Activated CD8-positive, alpha-beta T cell treated with anti-CD3 and anti-CD28 coated beads, Interleukin-2, amount 10 ng/mL, durations not matched to agents 7 days and 5 days (primary cell): ENCODE measurements at regions of chr11 and their contacts with region 1.

Region 1: DNA sequence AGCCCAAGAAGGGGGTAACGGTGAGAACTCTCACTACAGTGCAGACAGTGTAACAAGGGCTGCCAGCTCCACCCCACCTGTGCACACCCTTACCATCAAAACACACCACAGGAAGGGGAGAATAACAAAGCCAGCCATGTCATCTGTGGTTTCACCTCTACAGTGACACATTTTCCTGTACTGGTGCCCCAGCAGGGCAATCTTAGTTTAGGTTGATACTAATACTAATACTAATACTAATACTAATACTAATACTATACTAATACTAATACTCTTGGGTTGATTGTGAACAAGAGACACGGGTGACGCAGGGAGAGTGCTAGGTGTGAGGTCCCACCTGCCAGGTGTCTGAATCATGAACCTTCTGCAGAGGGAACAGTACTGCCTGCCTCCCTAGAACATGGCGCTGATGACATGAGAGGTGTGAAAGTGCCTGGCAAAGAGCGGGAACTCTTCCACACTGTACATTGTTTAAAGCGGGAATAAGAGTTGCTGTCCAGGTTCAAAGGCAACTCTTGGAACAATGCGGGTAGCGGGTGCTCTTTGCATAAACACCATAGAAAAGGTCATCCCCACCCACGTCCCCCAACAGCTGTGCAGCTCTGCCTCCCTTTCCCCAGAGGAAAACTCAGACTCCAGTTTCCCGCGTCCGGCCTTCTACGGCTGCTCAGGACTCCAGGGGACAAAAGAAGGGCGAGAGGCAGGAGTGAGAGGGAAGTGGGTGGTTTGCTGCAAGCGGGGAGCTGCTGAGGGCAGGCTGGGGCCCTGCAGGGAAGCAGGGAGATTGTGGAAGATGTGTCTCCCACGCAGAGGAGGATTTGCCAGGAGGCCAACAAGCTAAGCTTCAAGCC is 25.0 kb upstream of the TMPRSS4 start:
- DNase-seq: peak; percentile 86
- ATAC-seq: peak; percentile 91
- H3K4me3 Mint-ChIP-seq: peak overlapping the region; percentile 44
- H3K27ac Mint-ChIP-seq: peak overlapping the region; percentile 89
- H3K4me1 Mint-ChIP-seq: peaks cover 64% of the 10 kb centered on the region
- H3K27me3 Mint-ChIP-seq: peaks cover 2% of the 10 kb centered on the region

Region 2: DNA sequence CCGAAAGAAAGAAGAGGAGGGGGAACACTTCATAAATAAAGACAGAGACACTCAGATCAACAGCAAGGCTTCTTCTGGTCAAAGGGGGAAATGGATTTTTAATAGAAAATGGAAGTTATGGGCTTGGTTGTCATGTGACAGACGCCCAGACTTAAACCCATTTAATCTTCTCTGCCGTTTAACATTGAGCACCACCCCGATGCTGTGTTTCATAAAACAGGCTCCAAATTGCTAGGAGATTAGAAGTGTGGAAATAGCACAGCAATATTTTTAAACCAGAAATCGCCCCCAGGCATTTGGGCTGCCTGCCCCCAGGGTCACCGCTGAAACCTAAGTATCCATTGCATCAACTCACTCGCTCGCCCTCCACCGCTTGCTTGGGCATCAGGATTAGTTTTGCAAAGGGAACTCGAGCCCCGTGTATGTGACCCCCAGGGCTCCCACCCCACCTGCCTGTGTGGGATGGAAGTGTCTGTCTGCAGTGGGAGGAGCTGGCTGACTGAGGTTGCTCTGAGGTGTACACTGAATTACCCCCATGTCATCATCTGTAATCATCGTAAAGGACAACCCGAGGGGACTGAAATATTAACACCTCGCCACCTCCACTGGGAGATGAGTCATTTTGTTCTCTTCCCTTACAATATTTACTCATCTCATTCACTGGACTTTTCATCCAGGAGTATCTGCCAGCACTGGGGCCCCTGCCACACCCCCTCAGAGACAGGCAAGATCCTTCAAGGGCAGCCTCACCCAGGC is 265.5 kb before region 1 on chr11:
- CTCF ChIA-PET with region 1: no interaction called
- POLR2A ChIA-PET with region 1: no interaction called
- DNase-seq: no peak
- ATAC-seq: no peak
- H3K4me3 Mint-ChIP-seq: no peak overlapping the region
- H3K27ac Mint-ChIP-seq: no peak overlapping the region
- H3K4me1 Mint-ChIP-seq: no peaks in the 10 kb centered on the region
- H3K27me3 Mint-ChIP-seq: peaks cover 16% of the 10 kb centered on the region

Region 3: GRCh38 chr11:117807482-117808327 is 244.1 kb before region 1 on chr11:
- CTCF ChIA-PET with region 1: interaction called, 118 read pairs
- POLR2A ChIA-PET with region 1: interaction called, 3 read pairs
- DNase-seq: peak; percentile 86
- ATAC-seq: peak; percentile 66
- H3K4me3 Mint-ChIP-seq: no peak overlapping the region
- H3K27ac Mint-ChIP-seq: no peak overlapping the region
- H3K4me1 Mint-ChIP-seq: peaks cover 25% of the 10 kb centered on the region
- H3K27me3 Mint-ChIP-seq: no peaks in the 10 kb centered on the region

Region 4: GRCh38 chr11:117843666-117844484 is 208.0 kb before region 1 on chr11:
- CTCF ChIA-PET with region 1: interaction called, 105 read pairs
- POLR2A ChIA-PET with region 1: no interaction called
- DNase-seq: peak; percentile 90
- ATAC-seq: peak; percentile 85
- H3K4me3 Mint-ChIP-seq: no peak overlapping the region
- H3K27ac Mint-ChIP-seq: no peak overlapping the region
- H3K4me1 Mint-ChIP-seq: peaks cover 7% of the 10 kb centered on the region
- H3K27me3 Mint-ChIP-seq: peaks cover 11% of the 10 kb centered on the region

Region 5: DNA sequence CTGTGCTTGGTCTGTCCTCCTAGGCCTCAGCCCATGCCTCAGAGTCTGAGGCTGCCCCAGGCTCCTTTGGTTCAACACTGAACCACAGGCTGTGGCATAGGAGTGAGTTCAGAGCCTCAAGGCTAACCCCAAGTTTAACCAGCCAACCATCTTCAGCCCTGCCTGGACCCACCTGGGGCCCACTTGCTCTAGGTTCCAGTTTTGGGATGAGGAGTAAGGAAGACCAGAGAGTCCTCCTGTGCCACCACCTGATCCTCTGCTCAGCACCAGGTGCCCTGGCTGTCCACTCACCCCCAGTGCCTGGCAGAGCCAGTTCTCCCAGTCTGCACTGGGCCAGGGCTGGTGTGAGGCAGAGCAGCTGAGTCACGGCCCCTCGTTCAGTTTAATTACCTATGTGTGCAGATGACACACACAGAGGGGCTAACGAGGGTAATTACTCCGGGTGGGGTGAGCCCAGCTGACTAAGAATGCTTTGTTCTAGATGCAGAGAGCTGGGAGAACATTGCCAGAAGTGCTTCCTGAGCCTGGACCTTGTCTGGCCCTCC is 110.6 kb before region 1 on chr11:
- CTCF ChIA-PET with region 1: interaction called, 432 read pairs
- POLR2A ChIA-PET with region 1: interaction called, 6 read pairs
- DNase-seq: peak; percentile 21
- ATAC-seq: peak; percentile 38
- H3K4me3 Mint-ChIP-seq: no peak overlapping the region
- H3K27ac Mint-ChIP-seq: no peak overlapping the region
- H3K4me1 Mint-ChIP-seq: peaks cover 60% of the 10 kb centered on the region
- H3K27me3 Mint-ChIP-seq: no peaks in the 10 kb centered on the region

Region 6: DNA sequence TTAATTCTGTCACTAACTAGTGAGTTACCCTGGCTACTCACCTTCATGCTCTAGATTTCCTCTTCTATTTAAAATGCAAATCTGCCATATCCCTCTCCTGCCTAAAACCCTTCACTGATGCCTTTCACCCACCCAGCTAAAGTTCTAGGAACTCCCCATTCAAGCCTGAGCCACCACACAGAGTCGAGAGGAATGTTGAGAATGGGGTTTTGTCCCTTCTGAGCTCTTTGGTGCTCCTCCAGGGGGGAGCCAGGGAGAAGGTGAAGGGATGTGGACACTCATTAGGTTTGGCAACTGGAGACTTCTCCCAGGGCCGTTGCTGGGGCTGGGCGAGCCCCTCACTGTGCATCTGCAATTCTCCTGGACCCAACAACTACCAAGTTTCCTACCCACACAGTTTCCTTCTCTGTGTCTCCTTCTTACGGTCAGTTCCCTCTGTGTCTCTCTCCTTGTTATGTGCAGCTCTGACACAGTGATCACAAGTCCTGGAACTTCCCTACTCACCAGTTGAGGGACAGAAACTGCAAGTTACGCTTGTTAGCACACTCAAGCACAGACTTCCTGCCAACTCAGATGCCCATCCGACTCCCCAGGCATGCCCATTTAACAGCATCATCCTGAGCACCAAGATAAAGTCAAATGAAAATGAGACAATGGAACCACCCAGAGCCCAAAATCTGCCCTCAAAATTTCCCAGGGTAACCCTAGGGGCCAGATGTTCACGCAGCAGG is 72.2 kb before region 1 on chr11:
- CTCF ChIA-PET with region 1: interaction called, 71 read pairs
- POLR2A ChIA-PET with region 1: interaction called, 4 read pairs
- DNase-seq: no peak
- ATAC-seq: peak; percentile 32
- H3K4me3 Mint-ChIP-seq: no peak overlapping the region
- H3K27ac Mint-ChIP-seq: peak overlapping the region; percentile 81
- H3K4me1 Mint-ChIP-seq: peaks cover 81% of the 10 kb centered on the region
- H3K27me3 Mint-ChIP-seq: no peaks in the 10 kb centered on the region

Region 7: DNA sequence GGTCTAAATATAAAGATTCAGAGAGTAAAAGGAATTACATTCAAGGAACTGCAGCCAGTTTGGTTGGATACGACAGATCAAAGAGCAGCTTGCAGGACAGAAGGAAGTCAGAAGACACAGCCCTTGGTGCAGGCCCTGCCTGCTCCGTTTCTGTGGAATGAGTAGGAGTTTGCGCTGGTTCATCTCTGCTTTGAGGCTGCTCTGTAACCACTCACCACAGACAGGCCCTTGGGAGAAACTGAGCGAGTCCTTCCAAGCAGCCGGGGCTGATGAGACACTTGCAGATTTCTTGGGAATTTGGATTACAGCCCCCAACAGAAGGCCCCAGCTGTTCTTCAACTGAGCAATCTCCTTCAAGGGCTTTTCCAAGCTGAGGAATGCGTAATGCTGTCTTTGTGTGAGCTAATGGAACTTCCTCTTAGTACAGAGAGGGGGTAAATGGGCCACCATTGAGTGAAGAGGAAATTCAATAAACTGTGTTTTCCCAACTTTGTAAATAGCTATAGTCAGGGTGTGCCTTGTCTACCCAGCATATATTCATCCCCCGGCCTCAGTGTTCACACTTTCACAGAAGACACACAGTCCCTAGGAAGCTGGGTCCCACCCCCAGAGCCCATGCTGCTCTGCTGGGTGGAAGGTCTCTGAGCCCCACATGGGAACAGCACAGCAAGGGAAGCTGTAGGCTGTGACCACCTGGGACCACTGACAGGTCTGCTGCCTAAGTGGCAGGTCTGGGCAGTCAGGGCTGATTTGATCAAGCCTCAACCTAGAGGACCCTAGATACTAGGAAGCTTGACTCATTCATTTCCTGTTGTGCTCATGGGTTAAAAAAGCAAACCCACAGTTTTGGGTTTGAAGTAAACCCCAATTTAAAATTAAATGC is 49.1 kb before region 1 on chr11:
- CTCF ChIA-PET with region 1: interaction called, 168 read pairs
- POLR2A ChIA-PET with region 1: interaction called, 112 read pairs
- DNase-seq: peak; percentile 70
- ATAC-seq: peak; percentile 52
- H3K4me3 Mint-ChIP-seq: peak overlapping the region; percentile 72
- H3K27ac Mint-ChIP-seq: peak overlapping the region; percentile 98
- H3K4me1 Mint-ChIP-seq: peaks cover 100% of the 10 kb centered on the region
- H3K27me3 Mint-ChIP-seq: no peaks in the 10 kb centered on the region